Dendritic cell treated with granulocyte-macrophage colony-stimulating factor and Interleukin-4, amounts not matched to agents 40 ng/mL and 50 ng/mL, for 4 days (primary cell): ENCODE measurements at regions of chr10 and their contacts with region 1.

Region 1: GRCh38 chr10:125868372-125868975 is 12.6 kb downstream of the DHX32 start:
- H3K4me3 Mint-ChIP-seq: no peak overlapping the region
- H3K27ac Mint-ChIP-seq: no peak overlapping the region
- H3K4me1 Mint-ChIP-seq: no peaks in the 10 kb centered on the region
- H3K27me3 Mint-ChIP-seq: no peaks in the 10 kb centered on the region

Region 2: GRCh38 chr10:126101801-126102200 is 233.3 kb after region 1 on chr10:
- intact Hi-C with region 1: no loop called
- H3K4me3 Mint-ChIP-seq: no peak overlapping the region
- H3K27ac Mint-ChIP-seq: peak overlapping the region; percentile 11
- H3K4me1 Mint-ChIP-seq: peaks cover 40% of the 10 kb centered on the region
- H3K27me3 Mint-ChIP-seq: no peaks in the 10 kb centered on the region

Region 3: GRCh38 chr10:126252884-126253618 is 384.6 kb after region 1 on chr10:
- intact Hi-C with region 1: no loop called
- H3K4me3 Mint-ChIP-seq: no peak overlapping the region
- H3K27ac Mint-ChIP-seq: no peak overlapping the region
- H3K4me1 Mint-ChIP-seq: no peaks in the 10 kb centered on the region
- H3K27me3 Mint-ChIP-seq: peaks cover 2% of the 10 kb centered on the region

Region 4: GRCh38 chr10:126504063-126504739 is 635.7 kb after region 1 on chr10:
- intact Hi-C with region 1: loop called (anchors 10 kb)
- H3K4me3 Mint-ChIP-seq: no peak overlapping the region
- H3K27ac Mint-ChIP-seq: no peak overlapping the region
- H3K4me1 Mint-ChIP-seq: no peaks in the 10 kb centered on the region
- H3K27me3 Mint-ChIP-seq: no peaks in the 10 kb centered on the region

Region 5: GRCh38 chr10:126749015-126749655 is 880.7 kb after region 1 on chr10:
- intact Hi-C with region 1: loop called (anchors 5 kb)
- H3K4me3 Mint-ChIP-seq: no peak overlapping the region
- H3K27ac Mint-ChIP-seq: no peak overlapping the region
- H3K4me1 Mint-ChIP-seq: no peaks in the 10 kb centered on the region
- H3K27me3 Mint-ChIP-seq: peaks cover 1% of the 10 kb centered on the region